ENCODE measurements at regions of chr14 and their contacts with region 1.

Region 1: GRCh38 chr14:88323523-88324199 is 592 bp upstream of the KCNK10 start:
- DNase-seq: peak; percentile 30
- ATAC-seq: peak; percentile 80
- H3K4me3 Mint-ChIP-seq: peak overlapping the region; percentile 85
- H3K27ac Mint-ChIP-seq: no peak overlapping the region
- H3K4me1 Mint-ChIP-seq: peaks cover 7% of the 10 kb centered on the region
- H3K27me3 Mint-ChIP-seq: peaks cover 44% of the 10 kb centered on the region
- CTCF ChIP-seq: no peak

Region 2: GRCh38 chr14:88264116-88264515 is 59.5 kb before region 1 on chr14:
- CTCF ChIA-PET with region 1: no interaction called
- POLR2A ChIA-PET with region 1: no interaction called
- intact Hi-C with region 1: no loop called
- DNase-seq: no peak
- ATAC-seq: no peak
- H3K4me3 Mint-ChIP-seq: no peak overlapping the region
- H3K27ac Mint-ChIP-seq: no peak overlapping the region
- H3K4me1 Mint-ChIP-seq: no peaks in the 10 kb centered on the region
- H3K27me3 Mint-ChIP-seq: peaks cover 6% of the 10 kb centered on the region
- CTCF ChIP-seq: no peak

Region 3: GRCh38 chr14:88312257-88312656 is 11.4 kb before region 1 on chr14:
- CTCF ChIA-PET with region 1: no interaction called
- POLR2A ChIA-PET with region 1: no interaction called
- intact Hi-C with region 1: no loop called
- DNase-seq: no peak
- ATAC-seq: no peak
- H3K4me3 Mint-ChIP-seq: no peak overlapping the region
- H3K27ac Mint-ChIP-seq: no peak overlapping the region
- H3K4me1 Mint-ChIP-seq: no peaks in the 10 kb centered on the region
- H3K27me3 Mint-ChIP-seq: peaks cover 13% of the 10 kb centered on the region
- CTCF ChIP-seq: no peak

Region 4: DNA sequence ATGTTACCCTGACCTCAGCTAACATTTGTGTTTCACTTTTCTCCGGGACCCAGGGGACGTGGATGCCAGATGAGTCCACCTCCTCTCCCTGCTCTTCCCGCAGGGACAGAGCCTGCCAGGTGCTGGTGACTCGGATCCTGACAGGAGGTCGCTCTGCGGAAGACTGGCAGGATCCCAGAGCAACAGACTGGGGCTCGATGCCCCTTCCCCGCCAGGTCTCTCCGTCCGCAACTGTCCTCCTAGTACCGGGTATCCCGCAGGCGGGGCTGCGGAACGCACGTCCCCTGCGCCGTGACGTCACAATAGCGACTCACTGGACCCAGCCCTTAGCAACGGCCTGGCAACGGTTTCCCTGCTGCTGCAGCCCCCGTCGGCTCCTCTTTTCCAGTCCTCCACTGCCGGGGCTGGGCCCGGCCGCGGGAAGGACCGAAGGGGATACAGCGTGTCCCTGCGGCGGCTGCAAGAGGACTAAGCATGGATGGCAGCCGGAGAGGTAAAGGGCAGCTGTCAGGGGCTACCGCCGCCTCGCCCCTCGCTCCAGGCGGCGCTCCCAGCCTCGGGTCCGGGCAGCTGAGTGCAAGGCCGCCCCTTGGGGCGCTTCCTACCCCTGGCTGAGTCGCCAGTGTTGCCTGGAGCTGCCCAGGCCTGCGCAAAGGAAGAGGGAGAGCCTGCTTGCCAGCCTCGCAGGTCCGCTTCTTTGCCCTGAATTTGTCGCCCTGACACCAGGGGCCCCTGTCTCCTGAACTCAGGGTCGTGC is 61.9 kb after region 1 on chr14 and contains the start of gene SPATA7:
- CTCF ChIA-PET with region 1: no interaction called
- POLR2A ChIA-PET with region 1: no interaction called
- intact Hi-C with region 1: loop called (anchors 5 kb)
- DNase-seq: peak; percentile 71
- ATAC-seq: peak; percentile 94
- H3K4me3 Mint-ChIP-seq: peak within 1 kb of the TSS; percentile 94
- H3K27ac Mint-ChIP-seq: peak within 1 kb of the TSS; percentile 68
- H3K4me1 Mint-ChIP-seq: peaks cover 15% of the 10 kb centered on the region
- H3K27me3 Mint-ChIP-seq: peaks cover 2% of the 10 kb centered on the region
- CTCF ChIP-seq: no peak
- total RNA-seq, gene SPATA7: 1.4 and 1.6 TPM in 2 replicates

Region 5: GRCh38 chr14:89283315-89284060 is 959.8 kb after region 1 on chr14:
- CTCF ChIA-PET with region 1: no interaction called
- POLR2A ChIA-PET with region 1: no interaction called
- intact Hi-C with region 1: no loop called
- DNase-seq: no peak
- ATAC-seq: no peak
- H3K4me3 Mint-ChIP-seq: no peak overlapping the region
- H3K27ac Mint-ChIP-seq: no peak overlapping the region
- H3K4me1 Mint-ChIP-seq: peaks cover 11% of the 10 kb centered on the region
- H3K27me3 Mint-ChIP-seq: no peaks in the 10 kb centered on the region
- CTCF ChIP-seq: no peak